ENCODE measurements at regions of chr6 and their contacts with region 1.

Region 1: DNA sequence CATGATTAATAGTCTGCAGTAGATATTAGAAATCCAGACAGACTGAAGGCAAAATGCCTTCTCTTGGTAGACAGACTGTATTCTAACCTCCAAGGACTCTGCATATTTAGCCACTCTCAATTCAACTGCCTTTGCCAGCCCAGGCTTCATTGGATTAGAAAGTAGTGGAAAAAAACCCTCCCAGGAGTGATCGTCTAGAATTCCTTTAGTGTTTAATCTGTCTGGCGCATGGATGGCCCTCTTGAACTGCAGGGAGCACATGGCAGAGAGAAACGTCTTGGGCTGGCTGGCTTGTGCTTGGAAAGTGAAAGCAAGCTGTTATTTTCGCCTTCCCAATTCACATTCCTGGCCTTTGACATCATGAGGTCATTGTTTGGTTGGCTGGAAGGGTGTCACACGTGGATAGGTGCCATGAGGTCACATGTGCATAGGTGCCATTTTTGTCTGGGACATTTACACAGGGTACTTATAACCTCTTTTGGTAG is 30.9 kb upstream of the NEDD9 start:
- DNase-seq: peak; percentile 37 to 42
- H3K4me3 ChIP-seq: no peak overlapping the region
- H3K27ac ChIP-seq: no peak overlapping the region
- H3K4me1 ChIP-seq: peaks cover 18% of the 10 kb centered on the region
- H3K27me3 ChIP-seq: no peaks in the 10 kb centered on the region
- CTCF ChIP-seq: no peak

Region 2: DNA sequence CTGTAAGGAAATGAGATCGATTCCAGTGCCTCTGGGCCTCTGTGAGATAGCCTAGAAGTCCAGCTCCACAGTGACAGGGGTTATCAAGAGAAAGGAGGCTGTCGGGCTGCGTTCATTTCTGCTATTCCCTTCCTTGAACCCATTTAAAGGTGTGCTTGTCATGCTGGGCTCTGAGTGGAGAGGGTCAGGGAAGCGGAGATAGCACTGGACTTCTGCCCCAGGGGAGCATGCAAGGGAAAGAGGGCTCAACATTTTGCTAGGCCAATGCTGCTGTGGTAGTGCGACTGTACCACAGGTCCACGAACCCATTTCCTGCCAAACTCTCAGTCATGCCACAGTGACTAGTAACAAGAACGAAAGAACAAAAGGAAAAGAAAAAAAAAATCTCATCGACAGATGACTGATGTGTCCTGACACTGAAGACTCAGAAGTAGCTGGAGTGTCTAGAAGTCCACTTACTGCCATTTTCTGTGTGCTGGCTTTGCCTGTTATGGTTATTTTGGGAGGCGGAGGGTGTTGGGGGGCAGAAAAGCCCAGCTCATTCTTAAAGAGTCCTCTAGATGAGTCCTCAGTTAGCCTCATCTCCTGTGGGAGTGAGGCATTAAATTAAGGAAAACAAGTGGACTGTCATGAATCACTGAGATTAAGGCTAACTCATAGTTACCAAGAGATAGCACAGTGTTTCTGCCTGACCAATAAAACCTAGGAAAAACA is 38.9 kb before region 1 on chr6:
- CTCF ChIA-PET with region 1: no interaction called
- POLR2A ChIA-PET with region 1: no interaction called
- intact Hi-C with region 1: no loop called
- DNase-seq: no peak
- H3K4me3 ChIP-seq: no peak overlapping the region
- H3K27ac ChIP-seq: no peak overlapping the region
- H3K4me1 ChIP-seq: peaks cover 18% of the 10 kb centered on the region
- H3K27me3 ChIP-seq: no peaks in the 10 kb centered on the region
- CTCF ChIP-seq: no peak

Region 3: GRCh38 chr6:11288047-11288461 is 24.7 kb after region 1 on chr6:
- CTCF ChIA-PET with region 1: interaction called, 10 read pairs
- POLR2A ChIA-PET with region 1: no interaction called
- intact Hi-C with region 1: no loop called
- DNase-seq: no peak
- H3K4me3 ChIP-seq: no peak overlapping the region
- H3K27ac ChIP-seq: no peak overlapping the region
- H3K4me1 ChIP-seq: no peaks in the 10 kb centered on the region
- H3K27me3 ChIP-seq: no peaks in the 10 kb centered on the region
- CTCF ChIP-seq: no peak

Measured in PC-9 (cell line).